Lower lobe of right lung (tissue), 2 donors: ENCODE measurements at regions of chr17 and their contacts with region 1.

Region 1: DNA sequence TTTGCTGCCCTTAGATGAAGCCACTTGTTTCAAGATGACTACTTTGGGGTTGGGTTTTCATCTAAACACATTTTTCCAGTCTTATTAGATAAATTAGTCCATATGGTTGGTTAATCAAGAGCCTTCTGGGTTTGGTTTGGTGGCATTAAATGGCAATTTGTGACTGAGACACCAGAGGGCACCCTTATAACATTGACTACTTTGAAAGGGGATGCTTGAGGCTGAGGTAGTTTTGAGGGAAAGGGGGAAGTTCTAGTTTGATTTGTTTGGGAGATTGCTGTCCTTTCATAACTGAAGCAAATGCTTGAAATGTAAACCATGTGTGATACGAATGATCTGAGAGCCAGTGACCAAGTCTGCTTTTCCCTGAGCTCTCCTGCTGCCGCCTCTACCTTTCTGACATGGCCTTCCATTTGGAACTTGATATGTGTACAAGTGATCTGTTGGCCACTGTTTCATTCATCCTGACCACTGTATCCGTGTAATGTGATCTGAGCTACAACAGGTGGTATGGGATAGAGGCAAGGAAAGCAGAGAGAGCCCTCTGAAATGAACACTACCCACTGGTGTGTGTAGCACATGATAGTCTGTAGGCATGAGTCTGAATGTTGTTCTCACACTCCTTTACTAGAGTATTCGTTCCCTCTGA is 5.8 kb upstream of the RARA start:
- DNase-seq: no peak
- ATAC-seq: peak; percentile 78 to 81
- H3K4me3 ChIP-seq: no peak overlapping the region
- H3K27ac ChIP-seq: peak overlapping the region; percentile 20
- H3K4me1 ChIP-seq: peaks cover 46% of the 10 kb centered on the region
- H3K27me3 ChIP-seq: no peaks in the 10 kb centered on the region
- CTCF ChIP-seq: peak; percentile 78

Region 2: DNA sequence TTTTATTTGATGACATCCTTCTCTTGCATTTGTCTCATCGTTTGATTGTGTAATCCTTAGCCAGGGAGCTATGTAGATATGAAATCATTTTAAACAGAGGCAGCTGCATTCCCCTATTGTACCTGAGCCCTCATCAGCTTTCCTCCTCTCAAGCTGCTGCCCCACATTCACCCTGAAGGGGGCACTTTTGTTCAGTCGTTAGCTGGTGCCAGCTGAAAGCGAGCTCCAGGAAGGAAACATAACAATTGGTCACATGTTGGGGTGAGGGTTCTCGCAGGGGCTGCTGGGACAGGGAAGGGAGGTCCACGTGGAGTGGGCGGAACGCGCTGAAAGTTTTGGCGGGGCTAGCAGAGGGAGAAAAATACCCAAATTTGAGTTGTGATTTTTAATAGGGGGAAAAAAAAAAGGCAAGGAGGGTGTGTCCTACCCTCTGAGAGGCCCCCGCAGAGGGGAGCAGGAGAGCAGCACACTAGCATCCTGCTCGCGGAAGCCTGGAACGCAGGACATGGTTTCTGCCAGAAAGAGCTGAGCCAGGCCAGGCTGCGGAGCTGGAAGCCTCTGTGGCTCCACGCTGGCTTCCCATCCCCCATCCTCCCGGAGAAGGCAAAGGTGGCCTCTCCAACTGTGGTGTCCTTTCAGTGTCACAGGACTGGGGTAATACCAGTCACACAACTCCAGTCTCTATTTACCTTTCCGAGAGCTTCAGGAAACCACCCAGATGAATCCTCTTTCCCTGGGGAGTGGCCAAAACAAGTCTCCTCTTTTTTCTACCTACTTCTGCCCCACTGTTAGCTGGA is 189.8 kb before region 1 on chr17:
- intact Hi-C with region 1: no loop called
- DNase-seq: peak; percentile 92
- ATAC-seq: peak; percentile 88 to 90
- H3K4me3 ChIP-seq: peak overlapping the region; percentile 61
- H3K27ac ChIP-seq: peak overlapping the region; percentile 90
- H3K4me1 ChIP-seq: peaks cover 58% of the 10 kb centered on the region
- H3K27me3 ChIP-seq: no peaks in the 10 kb centered on the region
- CTCF ChIP-seq: peak; percentile 86

Region 3: DNA sequence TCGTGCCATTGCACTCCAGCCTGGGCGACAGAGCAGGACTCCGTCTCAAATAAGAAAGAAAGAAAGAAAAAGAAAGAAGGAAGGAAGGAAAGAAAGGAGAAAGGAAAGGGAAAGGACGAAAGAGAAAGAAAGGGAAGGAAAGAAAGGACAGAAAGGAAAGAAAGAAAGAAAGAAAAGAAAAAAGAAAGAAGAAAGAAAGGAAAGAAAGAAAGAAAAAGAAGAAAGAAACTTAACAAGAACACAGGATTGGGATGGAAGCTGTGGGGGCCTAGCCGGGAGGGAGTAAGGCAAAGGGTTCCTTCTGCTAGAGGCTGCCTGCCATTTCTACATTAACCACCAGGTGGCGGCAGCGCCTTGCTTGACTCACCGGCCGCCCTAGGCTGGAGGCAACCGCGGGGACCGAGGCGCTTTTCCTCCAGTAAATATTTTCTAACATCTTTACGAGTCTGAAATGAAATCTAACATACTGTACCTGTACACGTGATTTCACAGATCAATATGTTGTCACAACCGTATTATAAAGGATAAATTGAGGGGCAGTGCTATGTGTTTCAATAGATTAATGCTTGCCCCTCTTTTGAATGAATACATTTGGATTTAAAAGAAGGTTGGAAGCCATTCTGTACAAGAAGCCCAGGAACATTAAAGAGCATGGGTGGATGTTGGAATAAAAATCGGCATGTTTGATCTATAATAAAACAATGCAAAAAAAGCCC is 55.3 kb after region 1 on chr17:
- intact Hi-C with region 1: loop called (anchors 5 kb)
- DNase-seq: peak; percentile 94
- ATAC-seq: peak; percentile 79 to 80
- H3K4me3 ChIP-seq: no peak overlapping the region
- H3K27ac ChIP-seq: peak overlapping the region; percentile 0
- H3K4me1 ChIP-seq: peaks cover 41% of the 10 kb centered on the region
- H3K27me3 ChIP-seq: no peaks in the 10 kb centered on the region
- CTCF ChIP-seq: peak; percentile 99

Region 4: DNA sequence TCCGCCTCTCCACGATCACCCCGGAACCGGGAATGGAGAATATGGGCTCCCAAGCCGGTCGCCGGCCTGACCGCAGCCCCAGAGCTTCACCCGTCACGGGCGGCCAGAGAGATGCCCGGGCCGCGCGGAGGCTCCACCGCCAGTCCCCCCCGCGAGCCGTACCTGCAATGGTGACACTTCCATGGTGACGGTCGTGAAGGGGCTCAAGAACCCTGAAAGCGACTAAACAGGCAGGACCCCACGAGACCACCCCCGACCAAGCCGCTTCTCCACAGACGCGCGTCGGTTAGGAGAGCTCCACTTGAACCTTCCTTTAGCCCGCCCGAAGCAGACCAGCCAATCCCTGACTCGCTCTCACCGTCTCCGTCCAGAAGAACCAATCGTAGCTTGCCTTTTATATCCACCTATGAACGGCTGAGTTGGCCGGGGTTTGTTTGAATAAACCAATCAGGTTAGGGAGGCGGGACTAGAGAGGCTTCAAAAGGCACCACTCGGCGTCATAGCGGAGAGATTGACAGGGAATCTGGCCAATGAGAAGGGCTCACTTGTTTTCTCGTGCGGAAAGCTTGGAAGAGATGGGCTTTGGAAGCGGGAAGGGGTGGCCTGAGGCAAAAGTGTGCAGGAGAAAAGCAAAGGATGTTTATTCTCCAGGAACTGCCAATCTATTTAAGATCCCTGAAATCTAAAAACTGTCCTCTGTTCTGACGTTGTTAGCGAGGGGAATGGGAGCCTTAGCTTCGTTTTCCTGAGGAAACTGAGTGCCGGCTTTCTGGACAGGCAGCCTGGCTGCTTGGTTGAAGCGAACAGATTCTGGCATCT is 114.7 kb after region 1 on chr17 and contains the start of gene TOP2A:
- intact Hi-C with region 1: loop called (anchors 10 kb)
- DNase-seq: peak; percentile 89
- ATAC-seq: peak; percentile 99
- H3K4me3 ChIP-seq: peak within 1 kb of the TSS; percentile 64
- H3K27ac ChIP-seq: peak within 1 kb of the TSS; percentile 41
- H3K4me1 ChIP-seq: peaks cover 29% of the 10 kb centered on the region
- H3K27me3 ChIP-seq: no peaks in the 10 kb centered on the region
- CTCF ChIP-seq: no peak
- total RNA-seq, gene TOP2A: 6.7 TPM

Region 5: DNA sequence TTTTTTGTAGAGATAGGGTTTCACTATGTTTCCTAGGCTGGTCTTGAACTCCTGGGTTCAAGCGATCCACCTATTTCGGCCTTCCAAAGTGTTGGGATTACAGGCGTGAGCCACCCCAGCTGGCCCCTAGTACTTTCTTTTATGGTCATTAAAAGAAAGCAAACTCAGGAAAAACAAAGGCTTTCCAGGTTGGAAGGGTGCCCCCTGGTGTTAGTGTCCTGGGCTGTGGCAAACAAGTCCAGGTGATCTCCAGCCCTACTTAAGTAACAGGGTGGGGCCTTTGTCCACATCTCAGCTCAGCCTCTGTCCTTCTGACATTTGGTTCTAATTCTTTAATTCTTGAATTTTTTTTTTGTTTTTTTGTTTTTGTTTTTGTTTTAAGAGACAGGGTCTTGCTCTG is 147.0 kb after region 1 on chr17:
- intact Hi-C with region 1: no loop called
- DNase-seq: no peak
- ATAC-seq: no peak
- H3K4me3 ChIP-seq: peak overlapping the region; percentile 3
- H3K27ac ChIP-seq: peak overlapping the region; percentile 63
- H3K4me1 ChIP-seq: peaks cover 90% of the 10 kb centered on the region
- H3K27me3 ChIP-seq: no peaks in the 10 kb centered on the region
- CTCF ChIP-seq: peak; percentile 62